CD4-positive, alpha-beta T cell (primary cell): ENCODE measurements at regions of chr11 and their contacts with region 1.

Region 1: GRCh38 chr11:134223836-134224709 is at the starts of genes NCAPD3 and VPS26B:
- DNase-seq: peak; percentile 92 to 99 (median 94)
- ATAC-seq: peak; percentile 80
- H3K4me3 ChIP-seq: peak within 1 kb of the TSS; percentile 84
- H3K4me3 Mint-ChIP-seq: peak within 1 kb of the TSS; percentile 98
- H3K27ac ChIP-seq: peak within 1 kb of the TSS; percentile 88 to 96
- H3K27ac Mint-ChIP-seq: peak within 1 kb of the TSS; percentile 99
- H3K4me1 ChIP-seq: peaks cover 43% of the 10 kb centered on the region
- H3K4me1 Mint-ChIP-seq: peaks cover 69% of the 10 kb centered on the region
- H3K27me3 ChIP-seq: no peaks in the 10 kb centered on the region
- H3K27me3 Mint-ChIP-seq: peaks cover 4% of the 10 kb centered on the region
- CTCF ChIP-seq: no peak
- total RNA-seq, gene NCAPD3: 25.7 to 29.6 TPM
- total RNA-seq, gene VPS26B: 41.6 to 42.2 TPM

Region 2: GRCh38 chr11:134207538-134208239 is 16.4 kb before region 1 on chr11:
- CTCF ChIA-PET with region 1: interaction called, 5 read pairs
- POLR2A ChIA-PET with region 1: interaction called, 17 read pairs
- intact Hi-C with region 1: no loop called
- DNase-seq: peak; percentile 42 to 75 (median 56)
- ATAC-seq: peak; percentile 61
- H3K4me3 ChIP-seq: no peak overlapping the region
- H3K4me3 Mint-ChIP-seq: no peak overlapping the region
- H3K27ac ChIP-seq: no peak overlapping the region
- H3K27ac Mint-ChIP-seq: no peak overlapping the region
- H3K4me1 ChIP-seq: no peaks in the 10 kb centered on the region
- H3K4me1 Mint-ChIP-seq: no peaks in the 10 kb centered on the region
- H3K27me3 ChIP-seq: no peaks in the 10 kb centered on the region
- H3K27me3 Mint-ChIP-seq: no peaks in the 10 kb centered on the region
- CTCF ChIP-seq: peak; percentile 93

Region 3: DNA sequence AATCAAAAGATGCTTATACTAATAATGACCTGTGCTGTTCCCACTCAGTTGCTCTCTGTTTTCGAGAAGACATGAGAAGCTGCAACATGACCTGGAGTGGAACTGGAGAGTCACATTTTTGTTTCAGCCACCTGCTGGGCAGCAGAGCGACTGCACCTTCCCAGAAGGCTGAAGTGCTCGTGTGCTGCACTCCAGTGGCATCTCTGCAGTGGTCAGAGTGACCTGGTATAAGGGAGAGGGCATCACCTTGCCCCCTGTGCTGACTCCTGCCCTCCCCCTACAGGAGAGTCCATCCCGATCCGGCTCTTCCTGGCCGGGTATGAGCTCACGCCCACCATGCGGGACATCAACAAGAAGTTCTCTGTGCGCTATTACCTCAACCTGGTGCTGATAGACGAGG is 20.6 kb after region 1 on chr11:
- CTCF ChIA-PET with region 1: interaction called, 6 read pairs
- POLR2A ChIA-PET with region 1: interaction called, 94 read pairs
- intact Hi-C with region 1: no loop called
- DNase-seq: peak in 3 of 14 experiments; percentile 22 to 56 (median 53)
- ATAC-seq: peak; percentile 77
- H3K4me3 ChIP-seq: no peak overlapping the region
- H3K4me3 Mint-ChIP-seq: no peak overlapping the region
- H3K27ac ChIP-seq: no peak overlapping the region
- H3K27ac Mint-ChIP-seq: no peak overlapping the region
- H3K4me1 ChIP-seq: no peaks in the 10 kb centered on the region
- H3K4me1 Mint-ChIP-seq: no peaks in the 10 kb centered on the region
- H3K27me3 ChIP-seq: no peaks in the 10 kb centered on the region
- H3K27me3 Mint-ChIP-seq: no peaks in the 10 kb centered on the region
- CTCF ChIP-seq: peak; percentile 56

Region 4: DNA sequence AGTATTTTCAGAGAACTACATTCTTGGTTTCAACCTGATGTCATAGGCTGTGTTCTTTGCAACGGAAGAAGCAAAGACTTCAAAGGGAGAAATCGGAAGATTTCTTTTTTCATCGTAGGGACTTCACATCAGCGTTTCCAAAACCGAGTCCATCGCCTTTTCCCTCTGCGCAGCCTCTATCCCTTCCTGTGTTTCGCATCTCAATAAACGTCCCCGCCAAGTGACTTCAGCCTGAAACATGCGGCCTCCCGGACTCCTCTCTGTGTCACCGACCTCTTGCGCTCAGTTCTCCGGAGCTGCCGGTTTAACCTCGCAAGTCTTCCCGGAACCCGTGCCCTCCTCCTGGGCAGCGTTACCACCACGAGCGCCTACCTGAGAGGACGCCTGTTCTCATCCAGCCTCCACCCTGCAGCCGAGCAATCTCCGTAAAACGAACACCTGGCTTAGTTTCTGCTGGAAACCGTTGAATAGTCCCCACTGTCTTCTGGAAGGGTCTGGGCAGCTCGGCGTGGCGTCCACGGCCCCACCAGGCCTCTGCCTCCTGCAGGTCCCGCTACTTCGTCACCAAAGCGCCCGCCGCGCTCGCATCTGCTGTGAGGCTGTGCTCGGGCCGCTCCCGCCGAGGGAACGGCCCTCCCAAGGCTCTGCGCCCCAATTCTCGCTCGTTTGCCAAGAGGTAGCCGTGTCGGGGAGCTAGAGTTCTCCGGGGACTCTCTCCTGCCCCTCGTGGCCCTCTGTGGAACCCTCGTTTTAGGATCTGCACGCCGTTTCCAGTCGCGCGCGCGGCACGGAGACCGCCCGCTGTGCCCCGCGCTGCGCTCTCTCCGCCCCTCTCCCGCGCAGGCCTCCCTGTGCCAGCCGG is 51.7 kb after region 1 on chr11 and contains the start of gene GLB1L3:
- CTCF ChIA-PET with region 1: interaction called, 19 read pairs
- POLR2A ChIA-PET with region 1: interaction called, 54 read pairs
- intact Hi-C with region 1: loop called in 1 of 2 experiments (anchors 2 kb)
- DNase-seq: peak; percentile 62 to 90 (median 74)
- ATAC-seq: peak; percentile 93
- H3K4me3 ChIP-seq: peak within 1 kb of the TSS; percentile 91
- H3K4me3 Mint-ChIP-seq: peak within 1 kb of the TSS; percentile 92
- H3K27ac ChIP-seq: peak within 1 kb of the TSS; percentile 50 to 52
- H3K27ac Mint-ChIP-seq: peak within 1 kb of the TSS; percentile 83
- H3K4me1 ChIP-seq: peaks cover 33% of the 10 kb centered on the region
- H3K4me1 Mint-ChIP-seq: peaks cover 55% of the 10 kb centered on the region
- H3K27me3 ChIP-seq: peaks cover 6% of the 10 kb centered on the region in 2 experiments
- H3K27me3 Mint-ChIP-seq: peaks cover 3% of the 10 kb centered on the region
- CTCF ChIP-seq: peak; percentile 76
- total RNA-seq, gene GLB1L3: 1.3 to 1.5 TPM

Region 5: GRCh38 chr11:134294664-134295063 is 70.6 kb after region 1 on chr11:
- CTCF ChIA-PET with region 1: no interaction called
- POLR2A ChIA-PET with region 1: no interaction called
- intact Hi-C with region 1: no loop called
- DNase-seq: no peak
- ATAC-seq: no peak
- H3K4me3 ChIP-seq: no peak overlapping the region
- H3K4me3 Mint-ChIP-seq: no peak overlapping the region
- H3K27ac ChIP-seq: no peak overlapping the region
- H3K27ac Mint-ChIP-seq: no peak overlapping the region
- H3K4me1 ChIP-seq: no peaks in the 10 kb centered on the region
- H3K4me1 Mint-ChIP-seq: no peaks in the 10 kb centered on the region
- H3K27me3 ChIP-seq: no peaks in the 10 kb centered on the region
- H3K27me3 Mint-ChIP-seq: no peaks in the 10 kb centered on the region
- CTCF ChIP-seq: no peak